ENCODE measurements at regions of chr6 and their contacts with region 1.

Region 1: DNA sequence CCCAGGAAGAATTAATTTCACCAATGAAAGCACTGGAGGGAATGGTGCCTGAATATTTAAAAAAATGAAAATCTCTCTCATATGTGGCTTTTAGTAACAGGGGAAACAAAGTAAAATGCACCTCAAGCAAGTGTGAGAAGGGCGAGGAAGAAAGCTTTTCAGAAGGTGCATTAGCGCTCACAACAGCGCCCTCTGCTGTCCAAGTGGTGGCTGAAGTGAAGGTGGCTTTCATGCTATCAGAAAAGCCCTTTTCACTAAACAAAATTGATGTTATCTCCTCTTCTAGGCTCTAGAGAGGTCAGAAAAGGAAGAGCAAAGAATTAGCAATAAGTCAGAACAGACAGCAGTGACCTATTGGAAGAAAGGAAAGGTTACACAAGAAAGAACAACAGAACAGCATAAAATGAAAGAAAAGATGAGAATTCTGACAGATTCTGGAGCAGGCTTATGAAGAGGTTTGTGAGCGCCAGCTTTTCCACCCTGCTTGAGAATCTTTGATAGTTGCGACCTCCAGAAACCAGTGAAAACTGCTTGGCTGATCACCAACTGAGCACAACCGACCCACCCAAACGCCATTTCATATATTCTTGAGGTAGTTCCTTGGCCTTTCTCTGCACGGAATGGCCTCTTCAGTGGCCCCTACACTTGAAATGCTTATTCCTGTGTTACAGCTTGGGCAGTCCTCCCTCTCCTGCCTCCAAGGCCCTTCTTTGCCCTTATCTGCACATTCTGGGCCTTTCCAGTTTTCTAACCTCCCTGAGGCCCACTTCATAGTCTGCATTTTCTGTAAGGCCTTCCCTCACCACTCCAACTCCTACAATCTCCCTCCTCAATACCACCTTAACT is 45.3 kb downstream of the SMLR1 start:
- DNase-seq: peak; percentile 90

Region 2: DNA sequence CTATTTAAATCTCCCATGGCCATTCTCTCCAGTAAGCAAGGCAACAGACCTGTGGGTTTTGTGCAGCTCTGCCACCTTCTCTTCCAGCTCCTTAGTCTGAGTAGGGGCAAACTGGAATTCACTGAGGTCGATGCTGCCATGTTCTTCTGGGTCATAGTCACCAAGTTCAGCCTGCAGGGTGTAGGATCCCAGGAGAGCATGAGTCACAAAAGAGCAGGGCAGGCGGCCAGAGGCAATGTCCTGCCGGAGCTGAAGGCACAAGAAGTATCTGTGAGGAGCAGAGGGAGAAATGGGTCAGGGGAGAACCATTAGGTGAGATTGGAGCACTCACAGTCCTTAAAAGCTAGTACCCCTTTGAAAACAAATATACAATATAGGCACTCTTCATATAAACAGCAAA is 28.4 kb after region 1 on chr6:
- intact Hi-C with region 1: no loop called
- DNase-seq: peak; percentile 81

Region 3: GRCh38 chr6:130913120-130913519 is 40.6 kb after region 1 on chr6:
- intact Hi-C with region 1: no loop called
- DNase-seq: no peak

Region 4: DNA sequence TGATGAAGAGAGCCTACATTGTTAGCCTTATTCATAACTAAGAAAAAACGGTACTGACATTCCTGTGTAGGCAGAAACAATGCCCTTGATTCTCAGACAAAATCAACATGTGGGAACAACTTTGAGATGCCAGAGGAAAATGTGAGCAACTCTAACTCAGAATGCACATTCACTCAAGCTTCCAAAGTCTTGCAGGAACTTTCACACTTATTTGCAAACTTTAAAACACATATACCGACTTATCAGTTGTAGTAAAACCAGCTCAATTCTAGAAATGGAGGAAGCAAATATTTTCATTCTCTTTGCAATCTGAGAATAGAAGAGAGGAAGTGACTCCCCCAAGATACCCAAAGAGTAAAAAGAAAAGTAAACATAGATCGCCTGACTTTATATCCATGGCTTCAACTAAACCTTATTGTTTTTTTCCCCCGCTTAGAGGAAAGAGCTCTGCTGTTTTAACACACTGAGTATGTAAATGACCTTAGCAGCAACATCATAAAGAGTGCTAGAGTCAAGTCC is 73.0 kb after region 1 on chr6:
- intact Hi-C with region 1: loop called in 1 of 2 experiments (anchors 5 kb)
- DNase-seq: no peak

Measured in posterior vena cava (tissue), 2 donors.